ENCODE measurements at regions of chrX and their contacts with region 1.

Region 1: DNA sequence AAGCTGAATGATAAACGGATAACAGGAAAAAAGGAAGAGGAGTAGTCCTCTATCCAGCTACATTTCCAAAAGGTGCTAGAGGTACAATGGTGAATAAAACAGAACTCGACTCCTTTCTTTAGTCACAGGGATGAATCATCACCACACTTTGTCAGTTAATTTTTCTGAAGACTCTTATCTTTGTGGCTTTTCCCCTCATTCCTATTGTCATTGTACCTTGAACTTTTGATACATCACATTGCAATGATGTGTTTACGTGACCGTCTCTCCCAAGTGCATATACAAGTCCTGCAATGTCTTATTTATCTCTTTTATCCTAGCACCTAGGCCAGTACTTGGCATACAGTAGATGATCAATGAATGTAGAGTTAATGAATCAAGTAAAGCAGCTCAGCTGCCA is 134.7 kb downstream of the LHFPL1 start:
- DNase-seq: no peak
- H3K4me3 ChIP-seq: no peak overlapping the region
- H3K27ac ChIP-seq: no peak overlapping the region
- H3K4me1 ChIP-seq: no peaks in the 10 kb centered on the region
- H3K27me3 ChIP-seq: no peaks in the 10 kb centered on the region
- CTCF ChIP-seq: no peak
- EP300 ChIP-seq: no peak
- POLR2A ChIP-seq: no peak

Region 2: GRCh38 chrX:114451397-114451796 is 1906.3 kb after region 1 on chrX:
- in situ Hi-C with region 1: no loop called
- intact Hi-C with region 1: loop called (anchors 10 kb)
- DNase-seq: no peak
- H3K4me3 ChIP-seq: no peak overlapping the region
- H3K27ac ChIP-seq: no peak overlapping the region
- H3K4me1 ChIP-seq: no peaks in the 10 kb centered on the region
- H3K27me3 ChIP-seq: no peaks in the 10 kb centered on the region
- CTCF ChIP-seq: no peak
- EP300 ChIP-seq: no peak
- POLR2A ChIP-seq: no peak